ENCODE measurements at regions of chr4 and their contacts with region 1.

Region 1: DNA sequence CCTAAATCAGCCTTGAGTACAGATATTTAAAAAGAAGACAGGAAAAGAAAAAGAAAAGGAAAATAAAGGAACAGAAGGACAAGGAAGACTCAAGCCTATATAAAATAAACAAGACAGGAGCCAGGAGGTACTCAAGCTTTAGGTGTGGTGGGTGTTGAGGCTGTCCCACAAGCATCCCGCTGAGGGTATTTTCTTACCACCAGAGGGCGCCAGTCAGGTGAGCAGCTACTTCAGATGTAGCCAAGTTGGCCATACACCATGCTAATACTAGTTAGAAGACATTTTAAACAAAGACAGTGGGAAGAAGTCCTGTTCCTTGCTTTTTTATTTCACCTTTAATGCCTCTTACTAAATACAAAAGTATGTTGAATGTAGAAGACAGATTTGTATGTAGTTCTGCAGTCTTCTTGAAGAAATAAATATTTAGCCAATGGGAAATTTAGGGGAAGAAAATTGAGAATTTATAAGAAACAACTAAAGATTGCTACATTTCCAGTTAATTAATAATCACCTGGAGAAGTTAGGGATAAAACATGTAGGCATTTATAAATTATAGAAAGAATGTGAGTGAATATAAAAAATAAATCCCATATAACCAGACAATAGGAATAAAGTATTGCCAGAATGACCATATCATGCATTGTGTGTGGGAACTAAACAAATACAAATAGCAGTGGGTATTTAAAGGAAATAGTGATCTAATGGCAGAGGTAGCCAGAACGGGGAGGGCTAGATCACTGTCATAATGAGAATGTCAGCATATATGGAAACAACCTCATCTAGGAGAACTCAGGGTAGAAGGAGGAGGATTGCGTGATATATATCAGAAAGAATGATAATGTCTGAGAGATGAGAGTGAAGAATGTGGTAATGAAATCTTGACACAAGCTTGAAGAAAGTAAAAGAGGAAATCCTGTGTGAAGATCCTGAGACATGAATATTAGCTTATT is 71.0 kb downstream of the MTHFD2L start:
- DNase-seq: peak; percentile 48 to 65
- ATAC-seq: peak in 3 of 8 donors; percentile 52 to 70 (median 65)
- H3K4me3 ChIP-seq: no peak overlapping the region
- H3K27ac ChIP-seq: no peak overlapping the region
- H3K4me1 ChIP-seq: peaks cover 0 to 15% (median 7%) of the 10 kb centered on the region in 9 donors
- H3K27me3 ChIP-seq: no peaks in the 10 kb centered on the region
- CTCF ChIP-seq: peak; percentile 65 to 95 (median 80)

Region 2: GRCh38 chr4:73836373-73837279 is 392.3 kb before region 1 on chr4 and contains the start of gene CXCL6:
- intact Hi-C with region 1: no loop called
- DNase-seq: peak in 1 of 2 donors; percentile 41
- ATAC-seq: peak in 5 of 8 donors; percentile 31 to 60 (median 49)
- H3K4me3 ChIP-seq: peak within 1 kb of the TSS in 9 of 10 donors; percentile 4 to 52 (median 35)
- H3K27ac ChIP-seq: peak within 1 kb of the TSS in 1 of 10 donors; percentile 61
- H3K4me1 ChIP-seq: peaks cover 0 to 21% (median 5%) of the 10 kb centered on the region in 9 donors
- H3K27me3 ChIP-seq: peaks cover 0 to 51% (median 6%) of the 10 kb centered on the region in 7 donors
- CTCF ChIP-seq: no peak
- total RNA-seq, gene CXCL6: 0.28 to 3.7 TPM in 2 of 10 donors, not detected in the others

Region 3: GRCh38 chr4:74189331-74190043 is 39.5 kb before region 1 on chr4:
- intact Hi-C with region 1: loop called in 1 of 10 experiments (anchors 5 kb)
- DNase-seq: no peak
- ATAC-seq: no peak
- H3K4me3 ChIP-seq: no peak overlapping the region
- H3K27ac ChIP-seq: no peak overlapping the region
- H3K4me1 ChIP-seq: no peaks in the 10 kb centered on the region
- H3K27me3 ChIP-seq: no peaks in the 10 kb centered on the region
- CTCF ChIP-seq: peak; percentile 27 to 81 (median 76)

Region 4: DNA sequence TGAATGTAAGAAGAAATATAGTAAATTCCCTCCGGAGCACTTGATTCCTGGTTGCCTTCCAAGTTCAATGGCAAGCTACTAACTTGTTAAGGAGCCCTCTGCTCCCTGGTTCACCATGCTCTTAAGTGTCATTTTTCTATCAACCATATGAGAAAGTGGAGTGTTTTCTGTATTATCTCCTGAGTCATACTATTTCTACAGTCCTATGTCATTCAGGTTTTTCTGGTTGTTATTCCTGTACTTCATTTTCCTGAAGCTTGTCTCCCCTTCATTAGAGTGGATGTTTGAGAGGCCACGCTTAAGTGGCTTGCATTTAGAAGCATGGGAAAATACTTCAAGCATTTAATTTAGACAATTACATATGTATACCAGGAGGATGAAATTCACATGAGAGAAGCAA is 64.6 kb after region 1 on chr4:
- intact Hi-C with region 1: no loop called
- DNase-seq: no peak
- ATAC-seq: no peak
- H3K4me3 ChIP-seq: no peak overlapping the region
- H3K27ac ChIP-seq: no peak overlapping the region
- H3K4me1 ChIP-seq: no peaks in the 10 kb centered on the region
- H3K27me3 ChIP-seq: no peaks in the 10 kb centered on the region
- CTCF ChIP-seq: no peak

Measured in heart right ventricle (tissue), 16 donors.